Body of pancreas (tissue), 4 donors: ENCODE measurements at regions of chr5 and their contacts with region 1.

Region 1: DNA sequence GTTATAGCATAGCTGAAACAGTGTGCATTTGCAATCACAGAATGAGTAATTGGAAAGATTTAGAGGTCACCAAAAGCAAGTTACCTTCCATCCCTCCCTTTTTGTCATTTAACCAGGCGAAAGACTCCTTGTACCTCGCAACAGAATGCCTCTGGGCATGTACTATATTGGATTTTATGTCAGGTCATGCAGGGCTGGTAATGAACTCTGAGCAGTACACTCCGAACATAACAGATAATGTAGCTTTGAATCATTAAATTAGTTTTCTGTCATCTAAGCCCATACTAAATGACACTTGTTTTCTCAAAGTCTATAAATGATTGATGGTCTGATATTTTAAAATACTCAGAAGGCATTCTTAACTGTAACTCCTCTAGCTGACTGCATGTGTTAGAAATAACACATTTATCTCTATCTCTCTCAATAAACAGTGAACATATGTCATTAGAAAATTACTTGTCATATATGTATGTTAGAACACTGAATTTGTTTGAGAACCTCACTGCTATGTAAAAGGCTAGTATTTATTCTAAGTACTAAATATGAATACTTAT is 541.2 kb downstream of the CDH10 start:
- DNase-seq: no peak
- ATAC-seq: no peak
- H3K4me3 ChIP-seq: no peak overlapping the region
- H3K27ac ChIP-seq: no peak overlapping the region
- H3K4me1 ChIP-seq: no peaks in the 10 kb centered on the region
- H3K27me3 ChIP-seq: no peaks in the 10 kb centered on the region
- CTCF ChIP-seq: no peak
- POLR2A ChIP-seq: no peak

Region 2: GRCh38 chr5:23820765-23821471 is 282.6 kb before region 1 on chr5:
- intact Hi-C with region 1: loop called (anchors 10 kb)
- DNase-seq: no peak
- ATAC-seq: peak; percentile 68
- H3K4me3 ChIP-seq: no peak overlapping the region
- H3K27ac ChIP-seq: no peak overlapping the region
- H3K4me1 ChIP-seq: no peaks in the 10 kb centered on the region
- H3K27me3 ChIP-seq: no peaks in the 10 kb centered on the region
- CTCF ChIP-seq: peak in 6 of 7 experiments; percentile 32 to 53 (median 41)
- POLR2A ChIP-seq: no peak